PC-3 (cell line): ENCODE measurements at regions of chr15 and their contacts with region 1.

Region 1: DNA sequence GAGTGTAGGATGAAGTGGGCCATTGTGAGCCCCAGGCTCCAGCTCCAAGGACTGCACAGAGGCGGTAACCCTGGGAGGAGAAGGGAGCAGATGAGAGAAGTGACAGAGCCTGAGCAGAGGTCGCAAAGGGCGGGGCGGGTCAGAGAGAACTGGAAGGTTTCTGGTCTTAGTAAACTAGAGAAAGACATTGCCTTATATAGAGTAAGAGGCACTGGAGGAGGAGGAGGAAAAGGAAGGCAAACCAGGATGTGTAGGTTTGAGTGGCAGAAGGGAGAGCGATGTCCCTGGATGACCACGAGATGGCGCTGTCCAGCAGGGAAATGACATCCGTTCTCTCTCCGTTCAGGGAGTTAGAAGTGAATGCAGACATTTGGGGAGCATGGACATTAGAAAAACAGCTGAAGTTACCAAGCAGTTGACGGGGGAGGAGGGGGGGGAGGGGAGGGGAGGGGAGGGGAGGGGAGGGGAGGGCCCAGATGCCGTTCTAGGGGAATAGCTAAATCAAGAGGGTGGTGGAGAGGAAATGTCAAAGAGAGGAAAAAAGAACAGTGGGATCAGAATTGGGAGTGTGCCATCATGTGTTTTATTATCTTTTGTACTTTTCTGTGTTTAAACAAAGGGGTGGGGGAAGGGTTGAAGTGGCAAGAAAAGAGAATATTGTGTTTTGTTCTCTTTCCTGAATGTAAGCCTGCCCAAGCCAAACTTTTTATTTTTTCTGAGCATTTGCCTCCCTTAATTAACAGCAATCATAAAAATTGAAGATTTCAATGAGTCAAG is 48.8 kb downstream of the STARD5 start:
- DNase-seq: peak; percentile 79
- ATAC-seq: peak; percentile 86
- H3K4me3 ChIP-seq: no peak overlapping the region
- H3K27ac ChIP-seq: no peak overlapping the region
- H3K4me1 ChIP-seq: 0 out of 2 replicates have a peak, but pooled peaks cover 7% of the 10 kb centered on the region
- H3K27me3 ChIP-seq: peaks cover 4% of the 10 kb centered on the region
- CTCF ChIP-seq: peak; percentile 76

Region 2: DNA sequence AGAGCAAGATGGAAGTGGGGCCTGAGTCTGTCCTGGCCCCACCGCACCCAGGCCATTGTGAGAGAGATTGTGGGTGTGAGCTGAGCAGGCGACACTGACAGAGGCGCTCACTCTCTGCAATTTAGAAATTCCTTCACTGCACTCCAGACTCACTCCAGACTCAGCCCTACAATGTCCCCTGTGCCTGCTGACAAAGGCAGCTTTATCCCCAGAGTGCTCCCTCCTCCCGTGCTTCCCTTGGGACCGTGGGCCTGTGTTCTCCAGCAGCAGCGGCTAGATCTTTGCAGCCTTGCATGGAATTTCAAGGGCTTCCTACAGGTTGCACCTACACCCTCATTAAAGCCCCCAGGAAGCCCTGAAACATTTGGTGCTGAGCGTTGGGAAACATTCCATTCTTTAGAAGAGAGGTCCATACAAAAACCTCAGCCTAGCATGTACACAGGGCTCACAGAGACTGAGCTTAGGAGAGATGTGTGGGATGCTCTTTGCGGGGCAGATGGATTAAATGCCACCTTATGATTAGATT is 79.7 kb before region 1 on chr15:
- CTCF ChIA-PET with region 1: no interaction called
- POLR2A ChIA-PET with region 1: no interaction called
- intact Hi-C with region 1: no loop called
- DNase-seq: no peak
- ATAC-seq: no peak
- H3K4me3 ChIP-seq: no peak overlapping the region
- H3K27ac ChIP-seq: no peak overlapping the region
- H3K4me1 ChIP-seq: no peaks in the 10 kb centered on the region
- H3K27me3 ChIP-seq: peaks cover 60% of the 10 kb centered on the region
- CTCF ChIP-seq: no peak

Region 3: GRCh38 chr15:81400640-81401236 is 125.6 kb after region 1 on chr15:
- CTCF ChIA-PET with region 1: no interaction called
- POLR2A ChIA-PET with region 1: no interaction called
- intact Hi-C with region 1: loop called (anchors 1 kb)
- DNase-seq: peak; percentile 73
- ATAC-seq: peak; percentile 49
- H3K4me3 ChIP-seq: no peak overlapping the region
- H3K27ac ChIP-seq: no peak overlapping the region
- H3K4me1 ChIP-seq: peaks cover 14% of the 10 kb centered on the region
- H3K27me3 ChIP-seq: peaks cover 7% of the 10 kb centered on the region; the same call in 1 of the 2 replicates
- CTCF ChIP-seq: peak; percentile 85